Activated CD8-positive, alpha-beta T cell treated with anti-CD3 and anti-CD28 coated beads for 36 hours (primary cell): ENCODE measurements at regions of chr17 and their contacts with region 1.

Region 1: DNA sequence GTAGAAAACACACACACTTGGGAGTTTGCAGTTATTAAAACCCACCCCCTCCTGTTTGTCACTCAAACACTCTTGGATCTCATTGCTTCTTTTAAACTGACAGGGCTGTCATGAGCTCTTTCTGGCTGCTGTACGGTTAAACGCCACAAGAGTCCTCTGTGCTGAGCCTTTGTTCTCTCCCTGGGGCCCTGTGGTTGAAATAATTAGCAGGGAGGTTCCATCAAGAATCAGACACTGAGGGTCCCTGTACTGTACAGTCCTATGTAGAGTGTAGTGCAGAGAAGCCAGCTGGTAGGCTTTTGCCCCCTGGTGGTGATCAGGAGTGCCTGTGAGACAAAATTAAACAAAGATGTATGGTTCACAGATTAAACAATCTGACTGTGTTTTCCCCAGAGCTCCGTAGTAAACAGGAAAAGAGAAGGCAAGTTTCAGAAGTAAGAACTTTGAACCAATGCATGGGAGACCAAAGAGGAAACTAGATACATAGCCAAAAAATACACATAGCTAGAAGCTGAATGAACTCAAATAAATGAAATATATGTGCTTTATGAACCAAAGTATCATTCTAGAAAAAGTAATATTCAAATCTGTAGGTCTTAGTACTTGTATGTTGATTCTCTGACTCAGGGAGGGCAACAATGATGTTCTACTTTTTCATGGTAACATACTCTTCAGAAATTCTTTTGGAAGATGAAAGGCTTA is 1.4 kb upstream of the SSH2 start:
- DNase-seq: peak; percentile 85
- ATAC-seq: peak; percentile 79
- H3K4me3 Mint-ChIP-seq: no peak overlapping the region
- H3K27ac Mint-ChIP-seq: no peak overlapping the region
- H3K4me1 Mint-ChIP-seq: peaks cover 22% of the 10 kb centered on the region
- H3K27me3 Mint-ChIP-seq: no peaks in the 10 kb centered on the region
- CTCF ChIP-seq: peak; percentile 79

Region 2: DNA sequence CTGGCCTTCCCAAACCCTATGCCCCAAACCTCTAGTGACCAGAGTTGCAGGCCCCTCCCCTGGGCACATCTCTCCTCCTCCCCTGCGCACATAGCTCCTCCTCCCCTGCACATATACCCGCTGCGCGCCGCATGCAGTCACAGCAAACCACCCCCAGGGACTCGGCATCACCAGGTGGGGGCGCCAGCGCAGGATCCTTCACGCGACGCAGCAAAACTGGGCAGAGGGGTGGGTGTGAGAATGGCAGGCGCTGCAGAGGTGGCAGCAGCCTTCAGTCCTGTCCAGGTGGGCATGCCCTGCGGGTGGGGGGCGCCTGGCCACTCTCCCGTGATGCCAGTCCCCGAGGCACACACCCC is 314.3 kb before region 1 on chr17:
- CTCF ChIA-PET with region 1: interaction called, 32 read pairs
- POLR2A ChIA-PET with region 1: interaction called, 3 read pairs
- intact Hi-C with region 1: no loop called
- DNase-seq: peak; percentile 97
- ATAC-seq: peak; percentile 77
- H3K4me3 Mint-ChIP-seq: peak overlapping the region; percentile 84
- H3K27ac Mint-ChIP-seq: peak overlapping the region; percentile 88
- H3K4me1 Mint-ChIP-seq: peaks cover 40% of the 10 kb centered on the region
- H3K27me3 Mint-ChIP-seq: peaks cover 2% of the 10 kb centered on the region
- CTCF ChIP-seq: peak; percentile 66

Region 3: DNA sequence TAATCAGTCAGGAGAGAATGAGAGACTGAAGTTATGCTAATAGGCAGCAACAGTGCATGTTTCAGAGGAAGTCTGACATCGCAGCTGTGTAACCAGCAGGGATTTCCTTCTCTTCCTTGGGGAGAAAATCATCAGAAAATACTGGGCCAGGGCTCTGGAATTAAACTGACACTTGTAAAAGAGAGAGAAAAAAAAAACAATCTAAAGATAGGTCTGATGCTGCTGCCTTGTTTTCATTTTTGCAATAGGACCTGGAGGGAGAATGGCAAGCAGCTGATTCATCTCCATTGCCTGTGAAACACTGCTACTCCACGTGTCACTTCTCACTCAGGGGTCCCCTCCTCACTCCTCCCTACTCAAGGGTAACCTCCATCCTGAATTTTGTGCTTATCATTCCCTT is 291.0 kb before region 1 on chr17:
- CTCF ChIA-PET with region 1: interaction called, 30 read pairs
- POLR2A ChIA-PET with region 1: interaction called, 3 read pairs
- intact Hi-C with region 1: no loop called
- DNase-seq: no peak
- ATAC-seq: no peak
- H3K4me3 Mint-ChIP-seq: no peak overlapping the region
- H3K27ac Mint-ChIP-seq: peak overlapping the region; percentile 87
- H3K4me1 Mint-ChIP-seq: peaks cover 34% of the 10 kb centered on the region
- H3K27me3 Mint-ChIP-seq: no peaks in the 10 kb centered on the region
- CTCF ChIP-seq: no peak

Region 4: DNA sequence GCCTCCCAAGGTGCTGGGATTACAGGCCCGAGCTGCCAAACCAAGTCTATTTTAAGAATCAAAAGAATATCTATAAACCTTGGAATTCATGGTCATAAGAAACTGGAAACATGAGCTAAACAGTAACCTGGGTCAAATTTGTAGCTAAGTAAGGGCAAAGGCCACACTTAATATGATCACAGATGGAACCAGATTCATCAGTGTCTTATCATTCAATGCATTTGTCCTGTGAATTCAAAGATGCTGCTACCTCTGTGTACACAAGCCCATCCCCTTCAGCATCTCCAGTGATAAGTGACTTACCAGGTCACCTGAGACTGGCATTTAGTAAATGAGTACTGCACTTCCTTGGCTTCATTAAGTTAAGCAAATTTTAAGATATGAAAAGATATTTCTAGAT is 109.5 kb before region 1 on chr17:
- CTCF ChIA-PET with region 1: interaction called, 309 read pairs
- POLR2A ChIA-PET with region 1: interaction called, 4 read pairs
- intact Hi-C with region 1: no loop called
- DNase-seq: no peak
- ATAC-seq: no peak
- H3K4me3 Mint-ChIP-seq: no peak overlapping the region
- H3K27ac Mint-ChIP-seq: no peak overlapping the region
- H3K4me1 Mint-ChIP-seq: peaks cover 10% of the 10 kb centered on the region
- H3K27me3 Mint-ChIP-seq: no peaks in the 10 kb centered on the region
- CTCF ChIP-seq: no peak

Region 5: GRCh38 chr17:29835435-29836351 is 95.7 kb before region 1 on chr17:
- CTCF ChIA-PET with region 1: interaction called, 18 read pairs
- POLR2A ChIA-PET with region 1: no interaction called
- intact Hi-C with region 1: no loop called
- DNase-seq: no peak
- ATAC-seq: no peak
- H3K4me3 Mint-ChIP-seq: no peak overlapping the region
- H3K27ac Mint-ChIP-seq: no peak overlapping the region
- H3K4me1 Mint-ChIP-seq: peaks cover 4% of the 10 kb centered on the region
- H3K27me3 Mint-ChIP-seq: no peaks in the 10 kb centered on the region
- CTCF ChIP-seq: no peak

Region 6: GRCh38 chr17:29867643-29868181 is 63.7 kb before region 1 on chr17:
- CTCF ChIA-PET with region 1: interaction called, 24 read pairs
- POLR2A ChIA-PET with region 1: no interaction called
- intact Hi-C with region 1: loop called (anchors 10 kb)
- DNase-seq: no peak
- ATAC-seq: no peak
- H3K4me3 Mint-ChIP-seq: no peak overlapping the region
- H3K27ac Mint-ChIP-seq: no peak overlapping the region
- H3K4me1 Mint-ChIP-seq: peaks cover 13% of the 10 kb centered on the region
- H3K27me3 Mint-ChIP-seq: no peaks in the 10 kb centered on the region
- CTCF ChIP-seq: no peak

Region 7: GRCh38 chr17:29911641-29912177 is 19.7 kb before region 1 on chr17:
- CTCF ChIA-PET with region 1: interaction called, 61 read pairs
- POLR2A ChIA-PET with region 1: interaction called, 5 read pairs
- intact Hi-C with region 1: no loop called
- DNase-seq: no peak
- ATAC-seq: no peak
- H3K4me3 Mint-ChIP-seq: no peak overlapping the region
- H3K27ac Mint-ChIP-seq: no peak overlapping the region
- H3K4me1 Mint-ChIP-seq: peaks cover 22% of the 10 kb centered on the region
- H3K27me3 Mint-ChIP-seq: no peaks in the 10 kb centered on the region
- CTCF ChIP-seq: no peak